ENCODE measurements at regions of chr12 and their contacts with region 1.

Region 1: DNA sequence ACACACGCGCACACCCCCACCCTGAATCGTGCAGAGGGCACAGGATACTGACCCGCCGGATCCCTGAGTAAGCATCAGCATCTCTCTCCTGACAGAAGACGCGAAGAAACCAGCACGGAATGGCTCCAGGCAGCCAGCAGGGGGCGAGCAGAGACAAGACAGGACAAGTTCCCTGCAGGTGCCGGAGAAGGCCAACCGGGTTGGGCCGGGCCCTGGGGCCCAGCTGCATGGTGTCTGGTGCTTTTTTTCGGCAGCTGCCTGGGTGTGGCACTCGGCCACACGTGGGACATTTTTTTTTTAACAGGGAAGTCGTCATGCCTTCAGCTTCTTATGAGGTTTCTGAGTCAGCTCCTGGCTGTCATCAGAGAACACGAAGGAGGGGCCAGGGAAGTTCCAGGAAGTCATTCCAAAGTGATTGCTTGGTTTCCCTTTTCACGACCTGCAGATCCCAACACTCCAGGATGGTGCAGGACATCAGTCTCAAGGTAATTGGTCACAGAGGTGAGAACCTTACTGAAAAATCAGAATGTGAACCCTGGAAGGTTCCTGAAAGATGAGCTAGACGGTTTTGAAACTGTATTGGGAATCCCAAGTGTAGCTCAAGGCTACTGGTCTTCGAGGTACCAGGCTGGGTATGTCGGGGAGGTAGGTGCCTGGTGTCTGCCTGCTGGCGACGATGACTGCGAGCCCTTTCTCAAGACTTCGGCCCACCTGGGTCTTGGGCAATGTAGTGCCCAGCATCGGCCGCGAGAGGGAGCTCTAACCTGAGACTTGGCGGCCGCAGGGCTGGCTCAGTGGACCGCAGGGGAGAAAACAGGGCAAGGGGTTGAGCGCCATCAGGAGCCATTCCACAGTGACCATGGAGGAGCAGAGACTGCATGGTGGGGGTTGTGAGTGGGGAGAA is 190.8 kb upstream of the PRMT8 start:
- DNase-seq: peak; percentile 95
- H3K4me3 ChIP-seq: peak overlapping the region; percentile 10; the same call in 1 of the 2 replicates
- H3K27me3 ChIP-seq: no peaks in the 10 kb centered on the region
- CTCF ChIP-seq: peak; percentile 99

Region 2: DNA sequence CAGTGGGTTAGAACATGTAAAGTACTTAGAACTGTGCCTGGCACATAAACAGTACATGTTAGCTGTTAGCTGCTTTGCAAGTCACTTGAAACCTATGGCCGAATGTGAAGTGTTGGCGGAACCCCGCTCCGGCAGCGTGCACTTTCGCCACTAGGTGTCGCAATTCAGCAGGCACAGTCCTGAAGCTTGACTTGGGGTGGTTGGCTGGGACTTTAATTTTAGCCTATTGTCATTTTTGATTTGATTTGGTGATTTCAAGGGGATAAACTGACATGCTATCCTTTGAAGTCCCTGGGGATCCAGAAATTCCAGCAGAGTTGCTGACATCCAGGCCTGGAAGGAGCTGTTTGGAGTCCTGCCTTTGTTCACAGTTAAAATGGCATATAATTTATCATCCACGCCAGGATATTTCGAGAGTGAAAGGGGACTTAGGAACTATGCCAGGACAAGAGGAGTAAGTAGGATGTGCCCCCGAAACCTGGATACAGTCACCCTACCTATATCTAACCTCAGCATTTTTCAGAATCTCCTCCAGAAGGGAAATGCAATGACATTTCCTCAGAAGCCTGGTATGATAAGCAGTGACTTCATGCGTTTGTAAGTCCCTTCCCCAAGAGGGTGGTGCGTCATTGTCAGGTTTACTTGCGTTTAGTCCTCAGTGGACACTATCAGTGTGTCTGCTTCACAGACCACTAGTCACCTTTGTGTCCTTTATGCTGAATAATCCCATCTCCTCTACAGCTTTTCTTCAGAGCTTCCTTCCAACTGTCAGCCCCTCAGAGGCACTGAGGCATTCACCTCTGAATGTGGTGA is 226.5 kb before region 1 on chr12:
- CTCF ChIA-PET with region 1: interaction called, 12 read pairs
- POLR2A ChIA-PET with region 1: no interaction called
- DNase-seq: peak; percentile 36
- H3K4me3 ChIP-seq: no peak overlapping the region
- H3K27me3 ChIP-seq: no peaks in the 10 kb centered on the region; the same call in 1 of the 2 replicates
- CTCF ChIP-seq: peak; percentile 99

Region 3: DNA sequence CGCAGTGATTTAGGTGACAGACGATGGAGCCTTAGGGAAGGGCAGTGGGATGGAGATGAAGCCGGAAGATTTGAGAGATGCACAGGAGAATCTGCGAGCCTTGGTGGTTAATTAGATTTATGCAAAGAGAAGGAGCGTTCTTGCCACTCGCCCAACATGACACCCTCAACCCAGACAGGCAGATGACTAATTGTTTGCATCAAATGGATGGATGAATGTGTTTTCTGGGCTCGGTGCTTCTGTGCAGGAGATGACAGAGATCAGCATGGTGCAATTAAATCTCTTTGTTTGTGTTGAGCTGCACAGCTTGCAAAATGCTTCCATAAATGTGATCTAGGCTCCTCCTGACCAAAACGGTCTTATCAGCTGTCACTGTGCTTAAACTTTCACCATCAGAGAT is 11.5 kb before region 1 on chr12:
- CTCF ChIA-PET with region 1: interaction called, 46 read pairs
- POLR2A ChIA-PET with region 1: no interaction called
- DNase-seq: no peak
- H3K4me3 ChIP-seq: no peak overlapping the region
- H3K27me3 ChIP-seq: peaks cover 1% of the 10 kb centered on the region; the same call in 1 of the 2 replicates
- CTCF ChIP-seq: no peak

Region 4: DNA sequence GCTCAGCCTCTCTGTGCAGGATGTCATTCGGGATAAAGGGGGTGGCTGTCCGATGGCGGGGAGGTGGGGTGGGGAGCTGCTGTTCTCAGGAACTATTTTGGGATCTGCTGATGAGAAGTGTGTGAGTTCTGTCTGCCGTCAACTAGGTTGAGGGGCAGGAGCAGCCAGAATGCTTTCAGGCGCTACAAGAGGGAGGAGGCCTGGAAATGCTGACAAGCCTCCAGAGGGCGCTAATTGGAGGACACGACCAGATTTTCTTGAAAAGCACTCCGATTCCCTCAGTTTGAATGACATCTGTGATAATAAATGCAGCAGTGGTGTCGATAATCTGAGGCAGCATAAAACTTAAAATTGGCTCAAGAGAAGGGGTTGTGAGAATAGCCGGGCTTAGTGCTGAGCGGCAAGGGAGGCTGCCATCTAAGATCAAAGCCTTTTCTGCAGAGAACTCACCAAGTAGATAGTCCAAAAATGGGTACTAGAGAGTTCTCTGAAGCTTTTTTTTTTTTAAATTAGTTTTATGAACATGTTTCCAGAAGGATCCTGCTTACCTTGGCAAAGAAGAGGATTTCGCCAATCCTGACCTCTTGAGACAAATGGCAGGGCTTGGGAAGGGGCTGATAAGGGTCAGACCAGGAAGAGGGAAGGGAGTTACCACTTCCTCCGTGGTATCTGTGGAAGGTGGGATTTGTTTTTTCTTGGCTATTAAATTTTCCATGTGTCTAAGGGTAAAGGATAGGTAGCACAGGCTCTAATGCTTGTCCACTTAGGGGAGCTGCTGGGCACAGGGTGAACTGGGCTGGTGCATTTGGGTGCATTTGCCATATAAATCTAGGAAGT is 358.4 kb after region 1 on chr12:
- CTCF ChIA-PET with region 1: interaction called, 17 read pairs
- POLR2A ChIA-PET with region 1: no interaction called
- DNase-seq: no peak
- H3K4me3 ChIP-seq: no peak overlapping the region
- H3K27me3 ChIP-seq: no peaks in the 10 kb centered on the region; the same call in 1 of the 2 replicates
- CTCF ChIP-seq: peak; percentile 45

Region 5: GRCh38 chr12:3743803-3744202 is 443.6 kb after region 1 on chr12:
- CTCF ChIA-PET with region 1: interaction called, 10 read pairs
- POLR2A ChIA-PET with region 1: no interaction called
- DNase-seq: no peak
- H3K4me3 ChIP-seq: no peak overlapping the region
- H3K27me3 ChIP-seq: no peaks in the 10 kb centered on the region
- CTCF ChIP-seq: no peak

Region 6: DNA sequence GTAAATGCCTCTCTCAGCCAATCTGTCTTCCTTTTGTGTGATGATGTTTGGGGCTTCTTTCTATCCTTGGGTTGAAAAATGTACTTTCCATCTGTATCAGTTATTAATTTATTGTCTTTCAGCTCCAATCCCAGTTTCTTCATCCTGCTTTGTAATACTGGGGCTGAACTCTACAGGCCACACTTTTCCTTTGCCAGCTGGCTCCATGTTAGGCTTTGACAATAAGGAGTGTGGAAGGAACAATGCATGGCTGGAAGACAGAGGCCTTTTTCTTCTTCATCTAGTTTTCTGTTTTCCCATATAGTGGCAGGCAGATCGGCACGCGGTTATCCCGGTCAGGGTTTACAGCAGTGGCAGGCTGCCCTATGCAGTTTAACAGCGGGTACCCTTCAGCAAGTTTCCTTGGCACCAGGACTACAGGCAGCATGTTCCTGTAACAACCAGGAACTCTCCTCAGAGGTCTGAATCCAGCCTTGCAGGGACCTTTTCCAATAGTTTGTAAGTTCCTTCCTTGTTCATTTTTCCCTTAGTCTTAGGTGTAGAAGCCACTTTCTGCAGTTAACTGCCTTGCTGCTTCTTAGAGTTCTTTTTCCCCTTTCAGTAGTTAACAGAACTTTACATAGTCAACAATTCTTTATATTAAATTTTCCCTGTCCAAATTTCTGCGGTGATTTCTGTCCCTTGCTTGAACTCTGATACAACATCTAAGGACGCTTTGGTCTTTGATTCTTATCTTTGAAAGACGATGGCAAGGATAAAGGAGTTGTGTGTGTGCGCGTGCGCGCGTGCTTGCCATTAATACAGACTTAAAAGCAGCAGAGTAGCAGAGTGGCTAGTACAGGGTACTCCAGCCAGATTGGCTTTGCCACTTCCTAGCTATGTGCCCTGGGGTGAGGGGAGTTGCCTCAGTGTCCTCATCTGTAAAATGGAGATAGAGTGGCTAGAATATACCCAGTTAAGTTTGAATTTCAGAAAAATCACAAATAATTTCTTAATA is 491.4 kb after region 1 on chr12:
- CTCF ChIA-PET with region 1: interaction called, 61 read pairs
- POLR2A ChIA-PET with region 1: no interaction called
- DNase-seq: no peak
- H3K4me3 ChIP-seq: no peak overlapping the region
- H3K27me3 ChIP-seq: no peaks in the 10 kb centered on the region
- CTCF ChIP-seq: no peak

Region 7: DNA sequence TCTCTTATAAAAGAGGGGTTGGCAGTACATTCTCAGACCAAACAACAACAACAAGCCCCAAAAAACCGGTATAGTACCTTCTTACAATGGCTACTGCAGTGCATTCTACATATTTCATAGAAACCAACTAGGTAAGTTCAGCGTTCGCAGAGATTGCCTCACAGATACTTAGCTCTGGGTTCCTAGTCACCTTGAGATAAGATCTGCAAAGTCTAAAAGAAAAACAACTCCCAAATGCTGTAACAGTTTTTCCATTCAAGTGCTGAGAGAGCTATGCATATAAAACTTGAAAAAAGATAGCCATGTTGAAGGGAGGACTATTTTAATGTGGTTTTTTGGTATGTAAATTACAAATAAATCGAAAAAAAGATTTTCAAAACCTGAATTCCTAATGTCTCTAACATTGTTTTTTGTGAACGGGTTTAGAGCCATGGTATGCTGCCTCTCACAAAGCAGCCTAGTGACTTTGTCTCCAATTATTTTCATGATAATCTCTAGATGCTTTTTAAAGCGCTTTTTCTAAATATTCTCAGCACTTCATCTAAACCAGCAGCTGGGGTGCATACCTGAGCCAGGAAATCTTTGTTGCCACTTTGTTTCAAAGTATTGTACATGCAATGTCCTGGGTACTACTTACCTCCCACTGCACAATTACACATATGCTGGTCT is 509.3 kb after region 1 on chr12:
- CTCF ChIA-PET with region 1: interaction called, 107 read pairs
- POLR2A ChIA-PET with region 1: no interaction called
- DNase-seq: no peak
- H3K4me3 ChIP-seq: no peak overlapping the region
- H3K27me3 ChIP-seq: no peaks in the 10 kb centered on the region
- CTCF ChIP-seq: no peak

Measured in BJ (cell line).